ENCODE measurements at regions of chr11 and their contacts with region 1.

Region 1: GRCh38 chr11:72430741-72431570 is 3.4 kb downstream of the CLPB start:
- DNase-seq: peak; percentile 74
- H3K4me3 ChIP-seq: peak overlapping the region in 1 of 2 experiments; percentile 36; a peak in 1 of 4 replicates
- H3K27ac ChIP-seq: peak overlapping the region in 1 of 2 experiments; percentile 67; a peak in 2 of 4 replicates
- H3K4me1 ChIP-seq: peaks cover 9 to 44% of the 10 kb centered on the region in 2 experiments; a peak in 2 of 4 replicates
- H3K27me3 ChIP-seq: no peaks in the 10 kb centered on the region
- CTCF ChIP-seq: peak; percentile 91
- EP300 ChIP-seq: no peak
- RAD21 ChIP-seq: peak; percentile 98

Region 2: DNA sequence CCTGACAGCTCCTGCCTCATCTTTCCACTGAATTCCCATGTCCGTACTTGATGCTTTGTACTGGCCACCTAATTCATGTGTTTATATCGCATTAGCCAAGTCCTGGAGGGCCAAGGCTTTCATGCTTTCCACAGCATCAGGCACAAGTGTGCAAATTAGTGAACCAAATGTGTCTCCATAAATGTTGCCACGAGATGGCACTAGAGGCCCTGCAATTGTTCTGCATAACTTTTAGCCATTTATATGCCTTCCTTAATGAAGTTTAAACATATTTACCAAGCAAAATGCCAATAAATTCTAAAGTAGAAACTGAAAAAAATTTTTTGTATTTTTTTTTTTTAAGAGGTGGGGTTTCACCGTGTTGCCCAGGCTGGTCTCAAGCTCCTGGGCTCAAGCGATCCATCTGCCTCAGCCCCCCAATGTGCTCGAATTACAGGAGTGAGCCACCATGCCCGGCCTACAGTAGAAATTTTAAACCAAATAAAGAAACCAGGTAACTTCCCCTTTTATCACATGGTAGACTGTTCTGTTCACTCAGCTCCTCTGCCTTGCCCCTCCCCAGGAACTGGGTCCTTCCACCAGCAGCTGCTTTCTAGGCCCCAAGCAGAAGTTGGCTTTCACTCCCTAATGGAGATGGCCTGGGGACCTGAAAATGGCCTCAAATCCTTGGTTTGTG is 453.1 kb before region 1 on chr11:
- CTCF ChIA-PET with region 1: interaction called, 17 read pairs
- POLR2A ChIA-PET with region 1: no interaction called
- DNase-seq: peak; percentile 49
- H3K4me3 ChIP-seq: no peak overlapping the region
- H3K27ac ChIP-seq: no peak overlapping the region; a peak in 1 of 4 replicates
- H3K4me1 ChIP-seq: no peaks in the 10 kb centered on the region; a peak in 2 of 4 replicates
- H3K27me3 ChIP-seq: no peaks in the 10 kb centered on the region
- CTCF ChIP-seq: peak; percentile 86
- EP300 ChIP-seq: no peak
- RAD21 ChIP-seq: peak; percentile 88

Region 3: GRCh38 chr11:72102946-72103753 is 327.8 kb before region 1 on chr11 and contains the start of gene LAMTOR1:
- CTCF ChIA-PET with region 1: interaction called, 14 read pairs
- POLR2A ChIA-PET with region 1: interaction called, 3 read pairs
- DNase-seq: peak; percentile 98
- H3K4me3 ChIP-seq: peak within 1 kb of the TSS; percentile 88 to 89
- H3K27ac ChIP-seq: peak within 1 kb of the TSS; percentile 89 to 97
- H3K4me1 ChIP-seq: peaks cover 4 to 28% of the 10 kb centered on the region in 2 experiments; a peak in 2 of 4 replicates
- H3K27me3 ChIP-seq: no peaks in the 10 kb centered on the region
- CTCF ChIP-seq: peak; percentile 50
- EP300 ChIP-seq: peak; percentile 4 to 31; a peak in 1 of 4 replicates
- RAD21 ChIP-seq: peak; percentile 37
- polyA plus RNA-seq, gene LAMTOR1: 128 and 129 TPM in 2 replicates

Region 4: GRCh38 chr11:72238040-72238450 is 192.9 kb before region 1 on chr11:
- CTCF ChIA-PET with region 1: interaction called, 215 read pairs
- POLR2A ChIA-PET with region 1: interaction called, 136 read pairs
- DNase-seq: peak; percentile 87
- H3K4me3 ChIP-seq: peak overlapping the region; percentile 30 to 83; a peak in 2 of 4 replicates
- H3K27ac ChIP-seq: peak overlapping the region; percentile 64 to 90
- H3K4me1 ChIP-seq: peaks cover 17 to 27% of the 10 kb centered on the region in 2 experiments; a peak in 2 of 4 replicates
- H3K27me3 ChIP-seq: no peaks in the 10 kb centered on the region
- CTCF ChIP-seq: peak; percentile 91
- EP300 ChIP-seq: no peak
- RAD21 ChIP-seq: peak; percentile 56

Region 5: DNA sequence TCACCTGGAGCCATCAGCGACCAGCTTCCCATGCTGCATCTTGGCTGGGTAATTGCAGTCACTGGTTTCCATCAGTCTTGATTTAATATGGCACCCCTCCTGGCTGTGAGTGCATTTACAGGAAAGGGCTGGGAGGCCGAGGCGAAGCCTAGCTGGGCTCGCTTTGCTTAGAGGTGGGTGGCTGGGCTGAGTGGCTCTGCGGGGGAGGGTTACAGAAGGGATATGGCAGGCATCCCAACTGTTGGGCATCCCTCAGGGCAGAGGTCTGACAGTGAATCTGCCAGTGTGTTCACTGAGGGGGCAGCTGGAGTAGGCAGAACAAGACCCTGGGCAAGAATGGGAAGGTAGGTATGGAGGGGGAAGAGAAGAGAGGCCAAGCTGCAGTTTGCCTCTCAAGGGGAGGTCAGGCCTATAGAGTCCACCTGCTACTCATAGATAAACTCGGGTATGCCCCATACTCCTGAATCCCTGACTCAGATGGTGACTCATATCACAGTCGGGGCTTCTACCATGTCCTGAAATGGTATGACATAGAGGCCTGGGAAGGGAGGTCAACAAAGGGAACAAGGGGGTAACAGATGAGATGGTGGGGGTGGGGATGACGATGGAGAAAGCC is 109.5 kb before region 1 on chr11:
- CTCF ChIA-PET with region 1: interaction called, 14 read pairs
- POLR2A ChIA-PET with region 1: interaction called, 6 read pairs
- DNase-seq: peak; percentile 78
- H3K4me3 ChIP-seq: no peak overlapping the region
- H3K27ac ChIP-seq: peak overlapping the region; percentile 75 to 100
- H3K4me1 ChIP-seq: peaks cover 34 to 72% of the 10 kb centered on the region in 2 experiments
- H3K27me3 ChIP-seq: no peaks in the 10 kb centered on the region
- CTCF ChIP-seq: no peak
- EP300 ChIP-seq: peak; percentile 95 to 100
- RAD21 ChIP-seq: peak; percentile 44; the same call in 1 of the 2 replicates

Region 6: GRCh38 chr11:72413914-72414628 is 16.9 kb before region 1 on chr11:
- CTCF ChIA-PET with region 1: interaction called, 281 read pairs
- POLR2A ChIA-PET with region 1: interaction called, 19 read pairs
- DNase-seq: peak; percentile 80
- H3K4me3 ChIP-seq: no peak overlapping the region
- H3K27ac ChIP-seq: peak overlapping the region; percentile 52 to 100; a peak in 3 of 4 replicates
- H3K4me1 ChIP-seq: peaks cover 23 to 52% of the 10 kb centered on the region in 2 experiments
- H3K27me3 ChIP-seq: no peaks in the 10 kb centered on the region
- CTCF ChIP-seq: peak; percentile 93
- EP300 ChIP-seq: peak in 1 of 2 experiments; percentile 78; a peak in 2 of 4 replicates
- RAD21 ChIP-seq: peak; percentile 97